Gastrocnemius medialis (tissue), 4 donors: ENCODE measurements at regions of chr18 and their contacts with region 1.

Region 1: GRCh38 chr18:45384137-45384961 is 230.9 kb upstream of the SLC14A2 start:
- DNase-seq: peak; percentile 25 to 51
- ATAC-seq: peak; percentile 74 to 85
- H3K4me3 ChIP-seq: no peak overlapping the region
- H3K27ac ChIP-seq: peak overlapping the region in 1 of 4 donors; percentile 18
- H3K4me1 ChIP-seq: peaks cover 9 to 23% of the 10 kb centered on the region in 2 donors
- H3K27me3 ChIP-seq: no peaks in the 10 kb centered on the region
- CTCF ChIP-seq: peak; percentile 71 to 87 (median 79)
- POLR2A ChIP-seq: no peak

Region 2: GRCh38 chr18:43620936-43621335 is 1763.4 kb before region 1 on chr18:
- in situ Hi-C with region 1: no loop called
- intact Hi-C with region 1: loop called (anchors 10 kb)
- DNase-seq: no peak
- ATAC-seq: no peak
- H3K4me3 ChIP-seq: no peak overlapping the region
- H3K27ac ChIP-seq: no peak overlapping the region
- H3K4me1 ChIP-seq: no peaks in the 10 kb centered on the region
- H3K27me3 ChIP-seq: no peaks in the 10 kb centered on the region
- CTCF ChIP-seq: peak; percentile 39 to 56 (median 51)
- POLR2A ChIP-seq: no peak

Region 3: DNA sequence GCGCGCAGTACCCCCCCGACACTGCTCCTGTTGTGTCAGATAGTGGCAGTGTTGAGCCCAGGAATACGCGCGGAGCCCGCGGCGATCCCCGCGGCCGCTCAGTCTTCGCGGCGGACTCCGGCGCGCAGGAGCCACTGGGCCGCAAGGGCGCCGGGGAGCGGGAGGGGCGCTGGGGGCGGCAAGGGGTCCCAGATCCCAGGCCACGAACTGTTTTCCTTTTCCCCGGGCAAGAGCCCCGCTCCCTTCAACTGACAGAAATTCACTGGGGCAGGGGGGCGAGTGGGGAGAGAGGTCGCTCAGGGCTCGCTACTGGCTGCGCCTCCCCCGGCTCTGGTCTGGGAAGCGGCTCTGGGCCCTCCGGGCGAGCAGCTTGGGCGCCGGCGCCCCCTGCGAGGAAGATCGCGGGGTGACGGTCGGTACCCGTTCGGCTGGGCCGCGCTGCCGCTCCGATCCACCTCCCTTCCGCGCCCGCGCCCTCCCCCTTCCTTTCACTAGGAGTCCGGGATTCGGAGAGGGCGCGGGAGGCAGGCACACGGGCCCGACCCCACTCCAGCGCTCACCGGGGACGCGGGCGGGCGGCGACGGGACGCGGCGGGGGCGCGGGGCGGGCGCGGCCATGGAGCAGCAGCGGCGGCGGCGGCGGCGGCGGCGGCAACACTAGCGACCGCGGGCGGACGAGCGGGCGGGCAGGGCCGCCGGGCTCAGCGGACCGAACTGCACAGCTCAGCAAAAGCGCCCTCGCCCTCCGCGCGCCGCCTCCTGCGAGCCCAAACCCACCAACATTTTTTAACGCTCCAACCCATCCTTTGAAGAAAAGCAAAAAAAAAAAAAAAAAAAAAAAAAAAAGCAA is 705.1 kb before region 1 on chr18:
- in situ Hi-C with region 1: loop called in 2 of 4 experiments (anchors 10 kb)
- intact Hi-C with region 1: loop called (anchors 10 kb)
- DNase-seq: peak; percentile 84 to 87
- ATAC-seq: peak; percentile 75 to 79
- H3K4me3 ChIP-seq: peak overlapping the region; percentile 58 to 83 (median 79)
- H3K27ac ChIP-seq: peak overlapping the region; percentile 86 to 100 (median 96)
- H3K4me1 ChIP-seq: peaks cover 29 to 32% of the 10 kb centered on the region in 2 donors
- H3K27me3 ChIP-seq: no peaks in the 10 kb centered on the region
- CTCF ChIP-seq: peak; percentile 34 to 73 (median 70)
- POLR2A ChIP-seq: peak; percentile 89 to 91

Region 4: GRCh38 chr18:44909191-44909719 is 475.1 kb before region 1 on chr18:
- in situ Hi-C with region 1: loop called in 1 of 4 experiments (anchors 25 kb)
- intact Hi-C with region 1: no loop called
- DNase-seq: peak in 1 of 2 donors; percentile 20
- ATAC-seq: peak; percentile 49 to 53
- H3K4me3 ChIP-seq: no peak overlapping the region
- H3K27ac ChIP-seq: peak overlapping the region in 3 of 4 donors; percentile 2 to 37 (median 7)
- H3K4me1 ChIP-seq: peaks cover 13 to 35% of the 10 kb centered on the region in 2 donors
- H3K27me3 ChIP-seq: no peaks in the 10 kb centered on the region
- CTCF ChIP-seq: no peak
- POLR2A ChIP-seq: no peak

Region 5: DNA sequence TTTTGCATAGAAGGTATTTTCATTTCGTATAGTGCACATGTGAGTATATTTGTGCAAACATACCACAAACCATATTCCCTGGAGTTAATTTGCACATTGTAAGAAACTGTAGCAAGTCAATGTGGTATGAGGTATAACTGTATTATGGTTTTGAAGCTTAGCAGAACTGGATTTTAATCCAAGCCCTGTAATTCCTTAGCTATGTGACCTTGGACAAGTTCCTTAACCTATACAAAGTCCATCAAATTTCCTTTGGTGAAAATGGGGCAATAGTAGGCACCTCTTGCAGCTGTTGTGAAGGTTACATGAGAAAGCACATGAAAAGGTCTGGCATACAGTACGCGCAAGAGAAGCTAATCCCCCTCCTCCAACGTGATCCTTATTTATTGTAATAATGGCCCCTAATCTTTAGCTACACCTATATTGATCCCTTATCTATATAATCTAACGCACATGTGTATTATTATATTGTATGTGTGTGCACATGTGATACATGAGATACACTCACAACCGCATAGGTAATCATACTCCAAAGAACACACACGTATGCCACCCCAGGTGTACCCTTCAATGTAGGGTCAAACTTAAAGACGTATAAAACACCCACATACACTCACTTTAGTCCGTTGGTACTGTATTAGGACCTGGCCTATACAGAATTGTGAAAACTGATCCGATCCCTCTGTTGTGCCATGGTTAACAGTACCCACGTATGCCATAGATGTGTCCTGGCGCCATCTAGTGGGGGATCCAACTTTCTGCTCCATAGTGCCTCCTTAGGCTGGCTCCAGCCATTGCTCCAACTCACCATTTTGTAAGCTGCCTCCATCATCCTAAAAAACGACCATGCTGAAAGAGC is 171.9 kb before region 1 on chr18:
- in situ Hi-C with region 1: no loop called
- intact Hi-C with region 1: loop called (anchors 2 kb)
- DNase-seq: peak; percentile 67 to 82
- ATAC-seq: peak; percentile 96 to 100
- H3K4me3 ChIP-seq: no peak overlapping the region
- H3K27ac ChIP-seq: no peak overlapping the region
- H3K4me1 ChIP-seq: no peaks in the 10 kb centered on the region
- H3K27me3 ChIP-seq: no peaks in the 10 kb centered on the region
- CTCF ChIP-seq: peak; percentile 75 to 93 (median 81)
- POLR2A ChIP-seq: no peak

Region 6: GRCh38 chr18:45324495-45325113 is 59.7 kb before region 1 on chr18:
- in situ Hi-C with region 1: no loop called
- intact Hi-C with region 1: loop called (anchors 5 kb)
- DNase-seq: peak; percentile 88 to 97
- ATAC-seq: peak; percentile 75 to 77
- H3K4me3 ChIP-seq: peak overlapping the region; percentile 11 to 27 (median 20)
- H3K27ac ChIP-seq: peak overlapping the region; percentile 82 to 92 (median 90)
- H3K4me1 ChIP-seq: peaks cover 85% of the 10 kb centered on the region in 2 donors
- H3K27me3 ChIP-seq: no peaks in the 10 kb centered on the region
- CTCF ChIP-seq: peak in 1 of 5 experiments; percentile 12
- POLR2A ChIP-seq: peak in 1 of 2 donors; percentile 5

Region 7: GRCh38 chr18:45637546-45638327 is 253.4 kb after region 1 on chr18:
- in situ Hi-C with region 1: no loop called
- intact Hi-C with region 1: no loop called
- DNase-seq: no peak
- ATAC-seq: peak; percentile 71 to 94
- H3K4me3 ChIP-seq: no peak overlapping the region
- H3K27ac ChIP-seq: peak overlapping the region in 3 of 4 donors; percentile 36 to 66 (median 43)
- H3K4me1 ChIP-seq: peaks cover 0 to 15% of the 10 kb centered on the region in 2 donors
- H3K27me3 ChIP-seq: no peaks in the 10 kb centered on the region
- CTCF ChIP-seq: no peak
- POLR2A ChIP-seq: no peak